Natural killer cell (primary cell): ENCODE measurements at regions of chr2 and their contacts with region 1.

Region 1: DNA sequence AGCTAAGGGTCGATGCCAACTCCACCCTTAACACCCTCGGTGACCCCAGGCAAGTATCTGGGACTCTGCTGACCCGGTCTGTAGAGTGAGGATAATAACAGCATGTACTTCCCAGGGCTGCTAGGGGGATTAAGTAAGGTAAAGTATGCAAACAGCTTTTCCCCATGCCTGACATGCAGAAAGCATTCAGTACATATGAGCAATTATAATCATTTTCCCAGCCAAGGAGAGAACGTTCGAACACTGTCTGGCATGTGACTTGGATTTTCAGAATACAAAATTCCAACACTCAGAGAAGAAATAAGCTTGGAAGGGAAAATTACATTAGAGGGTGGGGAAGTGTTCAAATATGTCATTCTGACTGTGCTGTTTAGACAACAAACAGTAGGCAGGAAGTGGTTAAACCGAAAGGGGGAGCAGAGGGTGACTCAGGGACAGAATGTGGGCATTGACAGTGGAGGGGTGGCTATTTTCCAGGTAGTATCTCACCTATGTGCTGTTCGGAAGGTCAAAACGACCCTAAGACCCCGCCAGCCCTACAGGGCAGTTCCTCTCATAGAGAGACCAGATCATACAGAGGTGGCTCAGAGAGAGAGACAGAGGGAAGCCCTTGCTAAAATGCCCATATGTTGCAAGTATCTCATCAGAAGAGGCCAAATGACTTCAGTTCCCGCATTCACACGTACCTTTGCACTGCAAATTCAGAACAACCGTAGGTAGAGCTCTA is 14.9 kb downstream of the ASPRV1 start:
- DNase-seq: peak; percentile 52 to 75
- ATAC-seq: peak; percentile 87
- H3K4me3 ChIP-seq: no peak overlapping the region
- H3K4me3 Mint-ChIP-seq: peak overlapping the region; percentile 82
- H3K27ac ChIP-seq: peak overlapping the region; percentile 49
- H3K27ac Mint-ChIP-seq: peak overlapping the region; percentile 78 to 91
- H3K4me1 ChIP-seq: peaks cover 36% of the 10 kb centered on the region
- H3K4me1 Mint-ChIP-seq: peaks cover 34 to 42% of the 10 kb centered on the region in 2 donors
- H3K27me3 ChIP-seq: no peaks in the 10 kb centered on the region
- H3K27me3 Mint-ChIP-seq: no peaks in the 10 kb centered on the region
- CTCF ChIP-seq: no peak

Region 2: DNA sequence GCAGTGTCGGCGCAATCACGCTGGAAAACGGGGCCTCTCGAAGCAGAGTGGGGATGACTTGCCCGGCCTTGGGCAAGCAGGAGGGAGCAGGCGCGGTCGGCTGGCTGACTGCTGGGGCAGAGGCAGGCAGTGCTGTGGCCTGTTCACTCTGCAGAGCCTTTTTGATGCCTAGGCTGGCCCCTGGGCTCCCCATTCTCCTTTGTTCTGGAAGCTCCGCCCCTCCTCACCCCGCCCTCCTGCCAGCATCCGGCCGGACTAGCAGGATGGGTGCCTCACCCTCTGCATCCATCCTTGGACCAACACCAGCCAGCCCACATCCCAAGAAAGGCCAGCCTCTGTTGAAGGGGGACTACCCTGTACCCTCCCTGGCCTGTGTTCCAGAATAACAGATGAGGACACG is 15.0 kb after region 1 on chr2 and contains the start of gene ASPRV1:
- intact Hi-C with region 1: no loop called
- DNase-seq: no peak
- ATAC-seq: no peak
- H3K4me3 ChIP-seq: no peak within 1 kb of the TSS
- H3K4me3 Mint-ChIP-seq: no peak within 1 kb of the TSS
- H3K27ac ChIP-seq: no peak within 1 kb of the TSS
- H3K27ac Mint-ChIP-seq: no peak within 1 kb of the TSS
- H3K4me1 ChIP-seq: peaks cover 9% of the 10 kb centered on the region
- H3K4me1 Mint-ChIP-seq: peaks cover 5 to 10% of the 10 kb centered on the region in 2 donors
- H3K27me3 ChIP-seq: no peaks in the 10 kb centered on the region
- H3K27me3 Mint-ChIP-seq: no peaks in the 10 kb centered on the region
- CTCF ChIP-seq: no peak
- total RNA-seq, gene ASPRV1: 1.4 to 2.7 (median 1.9) TPM

Region 3: DNA sequence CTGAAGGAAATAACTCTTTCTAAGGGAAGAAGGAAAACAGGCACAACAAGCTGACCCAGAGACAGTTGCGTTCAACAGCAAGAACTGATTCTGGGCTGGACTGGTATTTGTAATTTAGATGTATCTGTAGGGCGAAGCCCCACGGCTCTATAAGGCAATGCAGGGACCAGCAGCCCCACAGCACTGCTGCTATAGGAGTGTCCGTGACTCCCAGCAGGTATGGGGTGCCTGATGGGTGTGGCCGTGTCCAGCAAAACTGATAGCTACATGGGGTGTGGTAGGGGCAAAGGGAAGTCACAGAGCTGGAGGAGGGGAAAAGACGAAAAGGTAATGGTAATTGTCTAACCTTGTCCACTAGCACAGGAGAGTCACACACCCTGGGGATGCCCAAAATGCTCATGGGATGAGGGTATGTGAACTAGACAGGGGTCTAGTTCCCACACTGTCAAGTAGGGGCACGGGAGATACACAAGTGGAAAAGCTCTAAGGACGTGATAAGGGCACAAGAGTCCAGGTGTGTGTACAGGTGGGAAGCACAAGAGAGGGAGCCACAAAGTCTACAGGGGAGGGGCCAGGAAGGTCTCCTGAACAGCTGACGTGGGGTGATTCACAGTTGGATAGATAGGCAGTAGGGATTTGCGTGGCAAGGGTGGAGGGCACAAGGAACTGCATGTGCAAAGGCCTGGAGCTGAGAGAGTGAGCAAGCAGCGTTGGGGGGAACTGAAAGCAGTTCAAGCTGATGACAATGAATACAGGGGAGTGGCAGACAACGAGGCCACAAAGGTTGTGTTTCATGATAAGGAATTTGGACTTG is 63.5 kb after region 1 on chr2:
- intact Hi-C with region 1: no loop called
- DNase-seq: peak in 1 of 2 donors; percentile 10
- ATAC-seq: peak; percentile 26 to 54 (median 28)
- H3K4me3 ChIP-seq: no peak overlapping the region
- H3K4me3 Mint-ChIP-seq: no peak overlapping the region
- H3K27ac ChIP-seq: no peak overlapping the region
- H3K27ac Mint-ChIP-seq: peak overlapping the region in 1 of 2 donors; percentile 17
- H3K4me1 ChIP-seq: peaks cover 16% of the 10 kb centered on the region
- H3K4me1 Mint-ChIP-seq: peaks cover 25 to 26% of the 10 kb centered on the region in 2 donors
- H3K27me3 ChIP-seq: no peaks in the 10 kb centered on the region
- H3K27me3 Mint-ChIP-seq: no peaks in the 10 kb centered on the region
- CTCF ChIP-seq: no peak

Region 4: DNA sequence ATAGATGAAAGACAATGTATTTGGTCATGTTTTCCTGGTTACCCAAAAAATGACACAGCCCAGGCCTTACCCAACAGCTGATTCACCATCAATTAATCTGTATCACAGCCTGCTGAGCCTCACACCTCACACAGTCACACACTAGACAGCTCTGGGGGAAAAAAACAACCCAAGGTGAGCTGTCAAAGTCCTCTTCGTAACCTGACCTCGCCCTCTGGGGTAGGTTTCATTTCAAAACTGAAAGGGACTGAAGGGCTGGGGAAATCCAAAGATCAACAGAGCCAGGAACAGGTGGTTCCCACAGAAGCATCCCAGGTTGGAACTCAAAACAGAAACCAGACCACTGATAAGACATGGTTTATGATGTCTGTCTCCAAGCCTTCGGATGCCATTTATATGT is 122.5 kb after region 1 on chr2:
- intact Hi-C with region 1: loop called (anchors 1 kb)
- DNase-seq: peak; percentile 58 to 93
- ATAC-seq: peak; percentile 84 to 93 (median 84)
- H3K4me3 ChIP-seq: no peak overlapping the region
- H3K4me3 Mint-ChIP-seq: peak overlapping the region; percentile 47
- H3K27ac ChIP-seq: peak overlapping the region; percentile 87
- H3K27ac Mint-ChIP-seq: peak overlapping the region; percentile 88 to 94
- H3K4me1 ChIP-seq: peaks cover 31% of the 10 kb centered on the region
- H3K4me1 Mint-ChIP-seq: peaks cover 31 to 35% of the 10 kb centered on the region in 2 donors
- H3K27me3 ChIP-seq: no peaks in the 10 kb centered on the region
- H3K27me3 Mint-ChIP-seq: no peaks in the 10 kb centered on the region
- CTCF ChIP-seq: no peak